Activated B cell treated with CpG ODN at 0.5 μM for 24 hours (primary cell): ENCODE measurements at regions of chr12 and their contacts with region 1.

Region 1: DNA sequence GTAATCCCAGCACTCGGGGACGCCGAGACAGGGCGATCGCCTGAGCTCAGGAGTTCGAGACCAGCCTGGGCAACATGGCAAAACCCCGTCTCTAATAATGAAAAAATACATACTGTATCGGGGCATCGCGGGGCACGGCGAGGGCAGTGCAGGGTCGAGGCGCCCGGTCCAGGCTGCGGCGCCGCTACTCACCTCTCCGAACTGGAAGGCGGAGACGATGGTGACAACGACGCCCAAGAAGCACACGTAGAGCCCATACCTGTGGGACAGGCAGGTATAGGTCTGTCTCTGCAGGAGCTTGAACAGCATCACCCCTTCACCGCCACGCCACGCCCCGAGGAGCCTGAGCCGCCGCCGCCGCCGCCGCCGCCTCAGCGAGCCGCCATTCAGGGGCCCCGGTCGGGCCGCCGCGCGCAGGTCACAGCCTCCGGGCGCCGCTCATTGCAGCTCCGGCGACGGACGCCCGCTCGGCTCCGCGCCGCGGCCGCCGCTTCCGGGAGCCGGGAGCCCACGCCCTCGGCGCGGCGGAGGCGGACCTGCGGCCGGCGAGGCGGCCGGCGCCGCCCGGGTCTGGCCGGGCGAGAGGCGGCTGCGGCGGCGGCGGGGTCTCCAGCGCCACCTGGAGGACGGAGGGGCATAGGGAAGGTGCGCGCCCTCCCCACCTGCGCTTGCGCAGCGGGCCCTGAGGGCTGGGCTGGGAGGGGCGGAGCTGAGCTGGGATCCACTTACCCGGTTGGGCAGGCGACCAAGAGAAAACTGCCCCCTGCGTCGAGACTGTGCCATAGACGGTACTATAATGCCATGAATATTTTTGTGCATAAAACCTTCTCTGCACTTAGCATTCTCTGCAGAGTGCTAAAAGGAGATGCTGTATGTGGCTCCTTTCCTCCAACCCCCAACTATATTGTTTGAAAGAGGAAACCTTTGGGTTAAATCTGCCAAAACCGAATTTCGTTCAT is at the start of gene GNPTAB:
- DNase-seq: peak; percentile 97
- ATAC-seq: peak; percentile 94
- H3K4me3 Mint-ChIP-seq: peak within 1 kb of the TSS; percentile 96
- H3K27ac Mint-ChIP-seq: peak within 1 kb of the TSS; percentile 87
- H3K4me1 Mint-ChIP-seq: peaks cover 33% of the 10 kb centered on the region
- H3K27me3 Mint-ChIP-seq: no peaks in the 10 kb centered on the region
- CTCF ChIP-seq: no peak
- total RNA-seq, gene GNPTAB: 41.8 and 42.8 TPM in 2 replicates

Region 2: DNA sequence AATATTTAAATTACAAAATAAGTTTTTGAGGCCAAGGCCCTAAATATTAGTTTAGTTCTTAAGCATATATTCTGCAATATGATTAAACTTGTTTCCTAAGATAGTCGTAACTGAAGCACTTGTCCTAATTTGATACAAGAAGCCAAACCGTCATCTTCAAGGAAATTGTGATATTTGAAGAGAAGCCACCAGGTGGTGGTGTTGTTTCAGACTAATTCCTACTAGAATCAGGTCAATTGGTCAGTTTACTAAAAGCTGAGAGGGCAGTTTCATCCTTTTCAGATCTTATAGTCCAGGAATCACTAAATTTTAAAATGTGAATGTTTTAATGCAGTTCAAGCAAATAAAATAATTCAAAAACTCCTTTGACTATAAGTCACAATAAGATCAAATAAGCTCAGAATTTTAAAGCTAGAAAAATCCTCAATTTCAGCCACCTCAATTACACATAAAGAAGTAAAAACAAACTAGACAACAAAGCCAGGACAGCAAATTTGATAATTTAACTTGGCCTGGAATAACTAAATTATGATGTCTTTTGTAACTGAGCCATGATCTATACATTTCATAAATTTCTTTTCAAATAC is 416.0 kb before region 1 on chr12:
- CTCF ChIA-PET with region 1: interaction called, 8 read pairs
- POLR2A ChIA-PET with region 1: no interaction called
- intact Hi-C with region 1: loop called (anchors 2 kb)
- DNase-seq: no peak
- ATAC-seq: no peak
- H3K4me3 Mint-ChIP-seq: no peak overlapping the region
- H3K27ac Mint-ChIP-seq: no peak overlapping the region
- H3K4me1 Mint-ChIP-seq: no peaks in the 10 kb centered on the region
- H3K27me3 Mint-ChIP-seq: no peaks in the 10 kb centered on the region
- CTCF ChIP-seq: peak; percentile 24

Region 3: GRCh38 chr12:101634724-101635123 is 195.9 kb before region 1 on chr12:
- CTCF ChIA-PET with region 1: no interaction called
- POLR2A ChIA-PET with region 1: no interaction called
- intact Hi-C with region 1: loop called (anchors 2 kb)
- DNase-seq: no peak
- ATAC-seq: peak; percentile 92
- H3K4me3 Mint-ChIP-seq: peak overlapping the region; percentile 69
- H3K27ac Mint-ChIP-seq: peak overlapping the region; percentile 94
- H3K4me1 Mint-ChIP-seq: peaks cover 41% of the 10 kb centered on the region
- H3K27me3 Mint-ChIP-seq: no peaks in the 10 kb centered on the region
- CTCF ChIP-seq: no peak

Region 4: DNA sequence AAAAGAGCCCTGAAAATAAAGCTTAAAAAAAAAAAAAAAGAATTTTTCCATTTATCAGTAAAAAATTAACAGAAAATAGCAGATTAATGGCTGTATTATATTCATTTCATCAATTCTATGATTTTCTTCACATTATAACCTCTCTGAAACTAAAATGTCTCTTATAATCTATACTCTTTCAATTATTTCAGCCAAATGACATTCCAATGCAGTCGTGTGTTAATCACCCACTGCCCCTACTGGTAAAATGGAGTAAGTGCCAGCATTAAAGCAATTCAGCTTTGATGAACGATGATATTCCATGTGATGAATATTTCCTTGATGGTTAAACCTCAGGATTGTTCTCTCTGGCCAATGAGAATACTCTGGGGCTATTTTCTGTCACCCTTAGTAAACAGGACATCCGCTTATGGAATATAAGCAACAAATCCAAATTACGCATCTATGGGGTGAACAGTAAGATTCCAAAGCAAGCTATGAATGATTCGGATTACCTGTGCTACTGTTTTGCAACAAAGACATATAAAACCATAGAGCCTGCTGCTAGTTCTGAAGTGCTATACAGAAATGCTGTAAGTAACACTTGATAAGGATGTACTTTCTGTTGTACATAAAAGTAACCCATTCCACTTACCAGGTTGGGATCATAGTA is 71.1 kb before region 1 on chr12:
- CTCF ChIA-PET with region 1: interaction called, 12 read pairs
- POLR2A ChIA-PET with region 1: no interaction called
- intact Hi-C with region 1: no loop called
- DNase-seq: no peak
- ATAC-seq: peak; percentile 79
- H3K4me3 Mint-ChIP-seq: no peak overlapping the region
- H3K27ac Mint-ChIP-seq: no peak overlapping the region
- H3K4me1 Mint-ChIP-seq: peaks cover 18% of the 10 kb centered on the region
- H3K27me3 Mint-ChIP-seq: no peaks in the 10 kb centered on the region
- CTCF ChIP-seq: peak; percentile 50

Region 5: DNA sequence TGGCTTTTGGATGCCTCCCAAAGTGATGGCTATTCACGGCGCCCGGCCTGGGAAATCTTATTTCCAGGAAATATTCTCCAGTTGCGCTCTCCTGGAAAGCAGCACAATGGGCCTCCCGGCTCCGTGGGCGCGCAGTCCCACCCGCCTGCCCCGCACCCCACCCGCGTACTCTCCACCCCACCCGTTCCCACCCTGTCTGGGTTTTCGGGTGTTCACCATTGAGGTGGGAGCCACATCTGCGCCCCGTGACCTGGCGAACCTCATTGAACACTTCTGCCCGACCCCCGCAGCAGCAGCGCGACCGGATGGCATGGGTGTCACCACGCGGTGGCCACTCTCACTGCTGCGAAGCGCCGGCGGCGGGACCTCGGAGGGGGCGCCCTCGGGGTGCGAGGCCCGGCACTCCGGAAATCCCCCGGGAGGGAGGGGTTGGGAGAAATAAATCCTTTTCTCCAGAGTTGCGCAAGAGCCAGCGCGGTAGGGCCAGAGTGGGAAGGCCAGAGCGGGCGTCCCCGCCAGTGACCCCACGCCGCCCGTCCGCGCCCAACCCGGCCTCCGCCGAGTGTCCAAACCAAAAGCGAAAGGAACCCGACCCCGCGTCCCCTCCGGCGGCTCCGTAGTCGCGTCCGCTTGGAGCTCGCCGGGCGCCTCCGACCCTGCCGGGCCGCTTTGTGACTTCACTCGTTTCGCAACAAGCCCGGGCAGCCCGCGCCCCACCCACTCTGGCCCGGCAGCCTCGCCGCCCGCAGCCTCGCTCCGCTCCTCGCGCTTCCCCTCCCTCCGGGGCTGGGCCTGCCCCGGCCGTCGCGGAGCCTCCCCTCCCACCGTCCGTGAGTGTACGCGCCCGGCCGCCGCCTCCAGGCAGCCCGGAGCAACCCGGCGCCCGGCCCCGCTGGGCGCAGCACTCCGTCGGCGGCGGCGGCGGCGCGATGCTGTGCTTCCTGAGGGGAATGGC is 46.5 kb after region 1 on chr12 and contains the start of gene DRAM1:
- CTCF ChIA-PET with region 1: interaction called, 3 read pairs
- POLR2A ChIA-PET with region 1: interaction called, 11 read pairs
- intact Hi-C with region 1: loop called (anchors 1 kb)
- DNase-seq: peak; percentile 77
- ATAC-seq: peak; percentile 93
- H3K4me3 Mint-ChIP-seq: peak within 1 kb of the TSS; percentile 90
- H3K27ac Mint-ChIP-seq: peak within 1 kb of the TSS; percentile 75
- H3K4me1 Mint-ChIP-seq: peaks cover 19% of the 10 kb centered on the region
- H3K27me3 Mint-ChIP-seq: no peaks in the 10 kb centered on the region
- CTCF ChIP-seq: no peak
- total RNA-seq, gene DRAM1: 9.6 and 11.5 TPM in 2 replicates

Region 6: DNA sequence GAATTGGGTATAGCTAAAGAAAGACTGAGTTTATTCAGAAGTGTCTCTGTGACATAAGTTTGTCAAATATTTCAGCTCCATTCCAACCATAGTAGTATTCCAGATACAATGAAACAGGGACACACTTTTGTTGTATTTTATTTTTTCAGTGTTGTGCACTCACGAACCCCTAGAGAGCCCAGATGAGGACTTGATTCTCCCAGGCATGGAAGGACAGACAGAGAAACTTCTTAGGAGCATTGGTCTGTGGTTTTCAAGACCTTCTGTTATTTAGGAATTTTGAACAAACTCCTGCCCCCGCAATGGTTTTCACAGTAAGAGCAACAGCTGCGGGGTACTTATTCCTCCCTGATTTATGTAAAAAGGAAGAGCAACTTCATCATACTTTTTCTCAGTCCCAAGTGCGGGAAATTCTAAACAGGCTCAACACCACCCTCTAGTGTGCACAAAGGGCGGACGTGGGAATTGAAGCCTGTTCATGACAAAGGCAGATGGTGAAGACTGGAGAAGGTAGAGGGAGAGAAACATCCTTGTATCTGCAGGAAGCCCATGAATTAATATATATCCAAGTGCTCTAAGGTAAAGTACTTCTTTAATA is 938.8 kb after region 1 on chr12:
- CTCF ChIA-PET with region 1: no interaction called
- POLR2A ChIA-PET with region 1: no interaction called
- intact Hi-C with region 1: loop called (anchors 5 kb)
- DNase-seq: no peak
- ATAC-seq: peak; percentile 71
- H3K4me3 Mint-ChIP-seq: no peak overlapping the region
- H3K27ac Mint-ChIP-seq: no peak overlapping the region
- H3K4me1 Mint-ChIP-seq: peaks cover 2% of the 10 kb centered on the region
- H3K27me3 Mint-ChIP-seq: peaks cover 10% of the 10 kb centered on the region
- CTCF ChIP-seq: no peak